Activated CD4-positive, alpha-beta T cell treated with anti-CD3 and anti-CD28 coated beads, Interleukin-2, amount 10 ng/mL, durations not matched to agents 24 days and 14 days (primary cell): ENCODE measurements at regions of chr6 and their contacts with region 1.

Region 1: GRCh38 chr6:26240154-26241032 is 124.6 kb upstream of the BTN3A2 start:
- DNase-seq: peak; percentile 95
- H3K4me3 Mint-ChIP-seq: peak overlapping the region; percentile 81
- H3K27ac Mint-ChIP-seq: peak overlapping the region; percentile 94
- H3K4me1 Mint-ChIP-seq: peaks cover 41% of the 10 kb centered on the region
- H3K27me3 Mint-ChIP-seq: no peaks in the 10 kb centered on the region

Region 2: DNA sequence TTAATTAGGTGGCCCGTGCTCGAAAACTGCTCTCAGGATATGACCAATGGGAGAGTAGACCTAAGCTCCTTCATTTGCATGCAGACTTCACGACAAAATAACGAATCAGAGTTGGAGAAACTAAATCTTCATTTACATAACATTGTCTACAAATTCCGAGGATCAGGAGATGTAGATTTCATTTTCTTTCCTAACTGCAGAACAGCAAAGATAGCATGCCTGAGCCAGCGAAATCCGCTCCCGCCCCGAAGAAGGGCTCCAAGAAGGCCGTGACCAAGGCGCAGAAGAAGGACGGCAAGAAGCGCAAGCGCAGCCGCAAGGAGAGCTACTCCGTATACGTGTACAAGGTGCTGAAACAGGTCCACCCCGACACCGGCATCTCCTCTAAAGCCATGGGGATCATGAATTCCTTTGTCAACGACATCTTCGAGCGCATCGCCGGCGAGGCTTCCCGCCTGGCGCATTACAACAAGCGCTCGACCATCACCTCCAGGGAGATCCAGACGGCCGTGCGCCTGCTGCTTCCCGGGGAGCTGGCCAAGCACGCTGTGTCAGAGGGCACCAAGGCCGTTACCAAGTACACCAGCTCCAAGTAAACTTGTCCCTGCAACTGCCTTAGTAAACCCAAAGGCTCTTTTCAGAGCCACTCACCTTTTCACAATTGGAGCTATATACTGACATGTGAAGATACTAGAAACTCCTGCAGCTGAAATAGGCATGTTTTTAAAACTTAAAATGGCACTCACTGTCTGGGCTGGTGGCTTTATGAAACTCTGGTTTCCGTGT is 56.6 kb before region 1 on chr6:
- intact Hi-C with region 1: loop called (anchors 2 kb)
- DNase-seq: peak; percentile 92
- H3K4me3 Mint-ChIP-seq: peak overlapping the region; percentile 93
- H3K27ac Mint-ChIP-seq: peak overlapping the region; percentile 98
- H3K4me1 Mint-ChIP-seq: peaks cover 55% of the 10 kb centered on the region
- H3K27me3 Mint-ChIP-seq: no peaks in the 10 kb centered on the region

Region 3: DNA sequence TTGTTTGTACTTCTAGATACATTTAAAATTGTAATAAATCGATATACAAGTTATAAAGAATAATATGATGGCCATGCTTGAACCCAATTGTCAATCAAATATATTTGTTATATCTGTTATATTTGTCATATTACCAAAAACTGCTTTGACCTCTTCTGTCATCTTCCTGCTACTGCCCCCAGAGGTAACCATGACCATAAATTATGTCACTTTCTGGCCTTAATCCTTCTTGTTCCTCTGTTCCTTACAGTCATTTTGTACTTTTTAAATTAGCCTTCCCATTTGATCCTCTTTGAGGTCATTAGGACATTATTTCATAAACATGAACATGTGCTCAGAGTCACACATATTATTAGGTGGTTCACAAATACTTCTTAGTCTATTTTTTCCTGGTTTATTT is 28.4 kb before region 1 on chr6:
- intact Hi-C with region 1: no loop called
- DNase-seq: no peak
- H3K4me3 Mint-ChIP-seq: no peak overlapping the region
- H3K27ac Mint-ChIP-seq: no peak overlapping the region
- H3K4me1 Mint-ChIP-seq: peaks cover 12% of the 10 kb centered on the region
- H3K27me3 Mint-ChIP-seq: no peaks in the 10 kb centered on the region

Region 4: GRCh38 chr6:26223650-26224546 is 16.5 kb before region 1 on chr6:
- intact Hi-C with region 1: loop called (anchors 2 kb)
- DNase-seq: peak; percentile 90
- H3K4me3 Mint-ChIP-seq: no peak overlapping the region
- H3K27ac Mint-ChIP-seq: no peak overlapping the region
- H3K4me1 Mint-ChIP-seq: peaks cover 30% of the 10 kb centered on the region
- H3K27me3 Mint-ChIP-seq: no peaks in the 10 kb centered on the region

Region 5: GRCh38 chr6:26363882-26364701 is 123.7 kb after region 1 on chr6:
- intact Hi-C with region 1: no loop called
- DNase-seq: peak; percentile 75
- H3K4me3 Mint-ChIP-seq: no peak overlapping the region
- H3K27ac Mint-ChIP-seq: no peak overlapping the region
- H3K4me1 Mint-ChIP-seq: peaks cover 41% of the 10 kb centered on the region
- H3K27me3 Mint-ChIP-seq: no peaks in the 10 kb centered on the region